ENCODE measurements at regions of chr7 and their contacts with region 1.

Region 1: DNA sequence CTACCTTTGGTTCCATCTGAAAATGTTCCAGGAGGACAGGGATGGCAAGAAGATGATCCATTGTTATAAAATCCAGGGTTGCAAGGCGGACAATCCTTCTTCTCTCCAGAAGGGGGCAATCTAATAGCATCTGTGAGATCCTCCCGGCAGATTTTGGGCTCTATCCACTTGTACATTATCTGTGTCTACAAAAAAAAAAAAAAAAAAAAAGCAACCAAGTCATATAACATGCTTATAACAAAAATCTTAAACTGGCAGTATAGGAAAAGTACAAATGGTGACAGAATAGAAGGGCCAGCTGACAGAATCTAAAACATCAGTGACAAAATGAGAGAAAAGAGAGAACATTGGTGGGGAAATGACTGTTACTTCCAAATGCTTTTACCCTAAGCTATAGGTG is 132.7 kb downstream of the ELAPOR2 start:
- DNase-seq: peak; percentile 47 to 63 (median 63)
- H3K4me3 ChIP-seq: no peak overlapping the region
- H3K27ac ChIP-seq: no peak overlapping the region
- H3K4me1 ChIP-seq: peaks cover 0 to 3% (median 0%) of the 10 kb centered on the region in 4 experiments
- H3K27me3 ChIP-seq: no peaks in the 10 kb centered on the region

Region 2: GRCh38 chr7:86889501-86889900 is 37.2 kb before region 1 on chr7:
- CTCF ChIA-PET with region 1: no interaction called
- POLR2A ChIA-PET with region 1: no interaction called
- DNase-seq: peak in 1 of 3 donors; percentile 0
- H3K4me3 ChIP-seq: no peak overlapping the region
- H3K27ac ChIP-seq: no peak overlapping the region
- H3K4me1 ChIP-seq: no peaks in the 10 kb centered on the region
- H3K27me3 ChIP-seq: no peaks in the 10 kb centered on the region

Region 3: GRCh38 chr7:86911700-86912099 is 15.0 kb before region 1 on chr7:
- CTCF ChIA-PET with region 1: interaction called, 17 read pairs
- POLR2A ChIA-PET with region 1: no interaction called
- DNase-seq: no peak
- H3K4me3 ChIP-seq: no peak overlapping the region
- H3K27ac ChIP-seq: no peak overlapping the region
- H3K4me1 ChIP-seq: no peaks in the 10 kb centered on the region
- H3K27me3 ChIP-seq: no peaks in the 10 kb centered on the region

Region 4: GRCh38 chr7:86939197-86939814 is 12.6 kb after region 1 on chr7:
- CTCF ChIA-PET with region 1: interaction called, 14 read pairs
- POLR2A ChIA-PET with region 1: no interaction called
- DNase-seq: peak; percentile 69 to 84 (median 80)
- H3K4me3 ChIP-seq: no peak overlapping the region
- H3K27ac ChIP-seq: no peak overlapping the region
- H3K4me1 ChIP-seq: no peaks in the 10 kb centered on the region
- H3K27me3 ChIP-seq: no peaks in the 10 kb centered on the region

Measured in common myeloid progenitor, CD34-positive (primary cell).